CD8-positive, alpha-beta T cell (primary cell): ENCODE measurements at regions of chr17 and their contacts with region 1.

Region 1: GRCh38 chr17:75131280-75132017 is at the start of gene NT5C:
- DNase-seq: peak in 8 of 9 experiments; percentile 43 to 82 (median 66)
- ATAC-seq: peak; percentile 79
- H3K4me3 ChIP-seq: peak within 1 kb of the TSS; percentile 80 to 84
- H3K4me3 Mint-ChIP-seq: peak within 1 kb of the TSS; percentile 86
- H3K27ac ChIP-seq: peak within 1 kb of the TSS; percentile 64 to 83
- H3K27ac Mint-ChIP-seq: peak within 1 kb of the TSS; percentile 77
- H3K4me1 ChIP-seq: peaks cover 8% of the 10 kb centered on the region
- H3K4me1 Mint-ChIP-seq: peaks cover 15% of the 10 kb centered on the region
- H3K27me3 ChIP-seq: no peaks in the 10 kb centered on the region
- H3K27me3 Mint-ChIP-seq: no peaks in the 10 kb centered on the region
- CTCF ChIP-seq: peak; percentile 19
- total RNA-seq, gene NT5C: 19.3 to 20.4 TPM

Region 2: GRCh38 chr17:75116737-75117136 is 14.7 kb before region 1 on chr17:
- CTCF ChIA-PET with region 1: interaction called, 65 read pairs
- POLR2A ChIA-PET with region 1: interaction called, 32 read pairs
- intact Hi-C with region 1: loop called (anchors 1 kb)
- DNase-seq: no peak
- ATAC-seq: no peak
- H3K4me3 ChIP-seq: no peak overlapping the region
- H3K4me3 Mint-ChIP-seq: no peak overlapping the region
- H3K27ac ChIP-seq: no peak overlapping the region
- H3K27ac Mint-ChIP-seq: no peak overlapping the region
- H3K4me1 ChIP-seq: peaks cover 14% of the 10 kb centered on the region
- H3K4me1 Mint-ChIP-seq: peaks cover 26% of the 10 kb centered on the region
- H3K27me3 ChIP-seq: no peaks in the 10 kb centered on the region
- H3K27me3 Mint-ChIP-seq: no peaks in the 10 kb centered on the region
- CTCF ChIP-seq: no peak

Region 3: DNA sequence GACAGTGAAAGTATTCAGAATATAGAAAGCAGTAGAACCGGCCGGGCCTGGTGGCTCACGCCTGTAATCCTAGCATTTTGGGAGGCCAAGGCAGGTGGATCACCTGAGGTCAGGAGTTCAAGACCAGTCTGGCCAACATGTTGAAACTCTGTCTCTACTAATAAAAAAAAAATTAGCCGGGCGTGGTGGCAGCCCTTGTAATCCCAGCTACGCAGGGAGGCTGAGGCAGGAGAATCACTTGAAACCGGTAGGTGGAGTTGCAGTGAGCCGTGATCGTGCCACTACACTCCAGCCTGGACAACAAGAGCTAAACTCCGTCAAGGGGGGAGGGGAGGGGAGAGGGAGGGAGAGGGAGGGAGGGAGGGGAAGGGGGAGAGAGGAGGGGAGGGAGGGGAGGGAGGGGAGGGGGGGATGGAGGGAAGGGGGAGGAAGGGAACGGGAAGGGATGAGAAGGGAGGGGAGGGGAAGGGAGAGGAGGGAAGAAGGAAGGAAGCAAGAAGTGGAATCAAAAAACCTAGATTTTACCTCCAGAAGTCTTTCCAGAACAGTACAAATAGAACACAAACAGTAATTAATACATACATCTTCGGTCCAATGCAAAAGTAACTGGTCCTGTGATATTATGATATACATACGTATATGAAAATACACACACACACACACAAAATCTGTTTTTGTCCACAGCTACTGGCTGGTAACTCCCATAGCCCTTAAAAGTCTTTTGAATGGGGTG is 11.0 kb after region 1 on chr17:
- CTCF ChIA-PET with region 1: interaction called, 13 read pairs
- POLR2A ChIA-PET with region 1: interaction called, 12 read pairs
- intact Hi-C with region 1: no loop called
- DNase-seq: no peak
- ATAC-seq: no peak
- H3K4me3 ChIP-seq: no peak overlapping the region
- H3K4me3 Mint-ChIP-seq: no peak overlapping the region
- H3K27ac ChIP-seq: no peak overlapping the region
- H3K27ac Mint-ChIP-seq: no peak overlapping the region
- H3K4me1 ChIP-seq: peaks cover 15% of the 10 kb centered on the region
- H3K4me1 Mint-ChIP-seq: peaks cover 10% of the 10 kb centered on the region
- H3K27me3 ChIP-seq: no peaks in the 10 kb centered on the region
- H3K27me3 Mint-ChIP-seq: no peaks in the 10 kb centered on the region
- CTCF ChIP-seq: no peak

Region 4: DNA sequence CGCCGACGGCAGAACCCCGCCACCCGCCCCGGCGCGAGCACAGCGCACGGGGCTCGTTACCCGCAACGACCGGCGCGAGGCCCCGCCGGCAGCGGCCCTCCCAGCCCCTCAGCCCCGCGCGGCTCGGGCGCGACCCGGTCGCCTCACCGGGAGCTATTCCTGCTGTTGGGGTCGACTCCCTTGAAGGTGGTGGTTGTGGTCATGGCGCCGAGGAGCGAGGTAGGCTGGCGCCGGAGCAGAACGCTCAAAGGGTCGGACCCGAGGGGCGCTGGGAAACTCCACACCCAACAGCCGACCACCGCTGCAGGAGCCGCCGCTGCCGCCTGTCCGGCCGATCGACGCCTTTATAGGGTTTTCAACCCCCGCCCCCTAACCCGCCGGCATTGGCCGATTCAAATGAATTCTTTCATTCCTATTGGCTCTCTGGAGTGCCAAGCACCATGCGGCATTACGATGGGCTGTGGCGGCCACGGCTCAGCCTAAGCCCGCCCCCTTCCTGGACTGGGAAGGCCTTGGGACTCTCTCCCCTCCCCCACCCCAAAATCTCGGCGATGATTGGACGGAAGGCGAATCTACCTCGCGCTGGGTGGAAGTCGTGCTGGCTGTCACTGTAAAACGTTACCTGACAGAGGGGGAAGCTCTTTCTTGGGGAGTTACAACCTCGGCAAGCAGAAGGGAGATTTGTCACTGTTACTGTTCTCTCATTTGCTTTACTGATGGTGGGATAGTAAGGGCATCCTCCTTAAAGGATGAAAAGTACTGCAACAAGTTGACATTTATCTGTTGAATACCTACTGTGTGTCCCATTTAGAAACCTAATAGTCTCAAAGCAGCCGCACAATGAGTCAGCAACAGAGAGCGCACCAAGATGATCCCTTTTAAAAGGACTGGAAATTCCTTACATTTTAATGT is 23.0 kb after region 1 on chr17 and contains the start of gene JPT1:
- CTCF ChIA-PET with region 1: interaction called, 6 read pairs
- POLR2A ChIA-PET with region 1: interaction called, 5 read pairs
- intact Hi-C with region 1: loop called (anchors 1 to 2 kb)
- DNase-seq: peak; percentile 94 to 99 (median 97)
- ATAC-seq: peak; percentile 97
- H3K4me3 ChIP-seq: peak within 1 kb of the TSS; percentile 88 to 94
- H3K4me3 Mint-ChIP-seq: peak within 1 kb of the TSS; percentile 91
- H3K27ac ChIP-seq: peak within 1 kb of the TSS; percentile 78 to 81
- H3K27ac Mint-ChIP-seq: peak within 1 kb of the TSS; percentile 87
- H3K4me1 ChIP-seq: peaks cover 23% of the 10 kb centered on the region
- H3K4me1 Mint-ChIP-seq: peaks cover 31% of the 10 kb centered on the region
- H3K27me3 ChIP-seq: no peaks in the 10 kb centered on the region
- H3K27me3 Mint-ChIP-seq: no peaks in the 10 kb centered on the region
- CTCF ChIP-seq: no peak
- total RNA-seq, gene JPT1: 15.1 to 17.3 TPM

Region 5: DNA sequence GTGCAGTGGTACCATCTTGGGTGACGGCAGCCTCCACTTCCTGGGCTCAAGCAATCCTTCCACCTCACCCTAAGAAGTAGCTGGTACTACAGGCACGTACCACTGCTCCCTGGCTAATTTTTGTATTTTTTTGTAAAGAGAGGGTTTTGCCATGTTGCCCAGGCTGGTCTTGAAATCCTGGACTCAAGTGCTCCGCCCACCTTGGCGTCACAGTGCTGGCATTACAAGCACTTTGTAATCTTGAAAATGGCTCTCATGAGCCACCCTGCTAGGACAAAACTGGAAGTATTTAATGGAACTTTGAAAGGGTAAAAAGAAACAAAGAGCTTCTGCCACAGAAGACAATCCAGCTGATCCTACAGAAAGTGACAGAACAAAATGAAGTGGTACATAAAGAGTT is 42.1 kb after region 1 on chr17:
- CTCF ChIA-PET with region 1: interaction called, 30 read pairs
- POLR2A ChIA-PET with region 1: no interaction called
- intact Hi-C with region 1: no loop called
- DNase-seq: no peak
- ATAC-seq: no peak
- H3K4me3 ChIP-seq: no peak overlapping the region
- H3K4me3 Mint-ChIP-seq: no peak overlapping the region
- H3K27ac ChIP-seq: no peak overlapping the region
- H3K27ac Mint-ChIP-seq: no peak overlapping the region
- H3K4me1 ChIP-seq: peaks cover 9% of the 10 kb centered on the region
- H3K4me1 Mint-ChIP-seq: peaks cover 19% of the 10 kb centered on the region
- H3K27me3 ChIP-seq: no peaks in the 10 kb centered on the region
- H3K27me3 Mint-ChIP-seq: no peaks in the 10 kb centered on the region
- CTCF ChIP-seq: no peak

Region 6: DNA sequence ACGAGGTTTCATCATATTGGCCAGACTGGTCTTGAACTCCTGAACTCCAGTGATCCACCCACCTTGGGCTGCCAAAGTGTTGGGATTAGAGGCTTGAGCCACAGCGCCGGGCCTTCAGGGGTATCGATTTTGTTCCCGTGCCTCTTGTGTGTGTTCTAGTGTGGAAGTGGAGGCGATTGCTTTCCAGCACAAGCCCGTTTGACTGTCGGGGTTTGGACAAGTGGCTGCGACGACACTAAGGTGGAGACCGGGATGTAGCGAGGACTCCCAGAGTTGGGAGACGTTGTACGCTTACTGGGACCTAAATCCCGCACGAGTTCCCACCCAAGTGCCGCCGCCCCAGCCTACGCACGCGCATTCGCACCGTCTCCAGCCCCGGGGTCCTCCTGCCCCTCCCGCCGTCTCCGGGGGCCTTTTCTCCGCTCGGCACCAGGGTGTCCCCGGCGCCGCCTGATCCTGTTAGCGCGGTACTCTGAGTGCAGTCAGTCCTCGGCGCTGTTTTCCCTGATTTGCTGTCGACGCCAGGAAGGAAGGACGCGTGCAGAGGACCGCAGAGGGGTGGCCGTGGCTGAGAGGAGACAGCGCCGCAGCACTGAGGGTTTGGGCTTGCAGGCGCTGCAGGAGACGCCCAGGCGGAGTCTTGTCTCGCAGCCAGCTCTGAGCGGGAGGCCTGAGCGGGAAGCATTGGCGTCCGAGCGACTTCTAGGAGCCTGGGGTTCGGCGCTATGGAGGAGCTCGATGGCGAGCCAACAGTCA is 73.8 kb after region 1 on chr17 and contains the start of gene NUP85:
- CTCF ChIA-PET with region 1: interaction called, 5 read pairs
- POLR2A ChIA-PET with region 1: no interaction called
- intact Hi-C with region 1: loop called in 1 of 2 experiments (anchors 1 kb)
- DNase-seq: peak; percentile 84 to 96 (median 92)
- ATAC-seq: peak; percentile 93
- H3K4me3 ChIP-seq: peak within 1 kb of the TSS; percentile 85 to 93
- H3K4me3 Mint-ChIP-seq: peak within 1 kb of the TSS; percentile 94
- H3K27ac ChIP-seq: peak within 1 kb of the TSS; percentile 70 to 89
- H3K27ac Mint-ChIP-seq: peak within 1 kb of the TSS; percentile 99
- H3K4me1 ChIP-seq: peaks cover 19% of the 10 kb centered on the region
- H3K4me1 Mint-ChIP-seq: peaks cover 23% of the 10 kb centered on the region
- H3K27me3 ChIP-seq: no peaks in the 10 kb centered on the region
- H3K27me3 Mint-ChIP-seq: no peaks in the 10 kb centered on the region
- CTCF ChIP-seq: no peak
- total RNA-seq, gene NUP85: 57.4 to 65.3 TPM